Motor neuron (in vitro differentiated cells): ENCODE measurements at regions of chr10 and their contacts with region 1.

Region 1: GRCh38 chr10:21495752-21496342 is 29.6 kb downstream of the SKIDA1 start:
- ATAC-seq: peak; percentile 68 to 84 (median 75)
- H3K4me3 ChIP-seq: peak overlapping the region; percentile 66 to 80 (median 79)
- H3K27ac ChIP-seq: peak overlapping the region; percentile 92 to 94
- H3K4me1 ChIP-seq: peaks cover 12 to 17% of the 10 kb centered on the region in 2 donors

Region 2: GRCh38 chr10:20858292-20859124 is 637.3 kb before region 1 on chr10:
- in situ Hi-C with region 1: loop called in 1 of 9 experiments (anchors 25 kb)
- ATAC-seq: peak in 3 of 8 experiments; percentile 25 to 68 (median 55)
- H3K4me3 ChIP-seq: no peak overlapping the region
- H3K27ac ChIP-seq: no peak overlapping the region
- H3K4me1 ChIP-seq: no peaks in the 10 kb centered on the region

Region 3: DNA sequence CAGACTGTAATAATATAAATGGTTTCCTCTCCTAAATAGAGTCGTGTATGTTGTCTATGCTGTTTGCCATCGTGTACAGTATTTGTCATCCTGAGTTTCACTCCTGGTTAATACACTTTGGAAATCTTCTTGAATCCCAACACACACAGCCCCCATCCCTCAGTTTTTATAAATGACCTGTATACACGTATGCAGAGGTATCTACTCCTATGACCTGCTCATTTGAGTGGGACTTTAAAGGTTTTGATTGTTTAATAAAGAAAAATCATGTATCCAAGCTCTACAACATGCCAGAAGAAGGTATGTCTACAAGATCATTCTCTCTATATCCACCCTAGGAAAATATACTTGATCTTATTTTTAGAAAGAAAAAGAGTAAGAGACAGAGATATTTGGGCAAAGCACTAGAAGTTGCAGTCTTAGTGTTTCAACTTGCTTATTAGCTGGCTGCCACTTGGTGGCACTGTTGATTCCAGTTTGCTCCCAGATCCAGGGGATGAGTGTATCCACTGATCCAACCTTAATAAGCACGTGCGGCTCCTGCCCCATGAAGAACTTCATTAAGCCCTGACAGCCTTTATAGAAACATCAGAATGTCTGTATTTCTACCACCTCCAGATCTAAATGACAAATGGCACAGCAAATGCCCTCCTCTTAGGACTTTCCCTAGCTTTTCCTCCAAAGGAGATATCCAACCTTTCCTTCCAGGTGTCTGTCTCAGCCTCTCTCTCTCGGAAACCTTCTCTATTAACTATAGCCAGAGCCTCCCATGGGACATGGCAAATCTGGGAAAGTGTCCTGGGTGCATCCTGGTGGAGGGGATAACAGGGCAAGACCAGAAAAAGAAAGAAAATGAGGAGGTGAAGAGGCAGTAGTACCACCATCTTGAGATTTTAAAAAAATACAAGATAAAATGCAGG is 417.2 kb before region 1 on chr10:
- in situ Hi-C with region 1: loop called in 1 of 9 experiments (anchors 25 kb)
- ATAC-seq: peak; percentile 83 to 97 (median 91)
- H3K4me3 ChIP-seq: no peak overlapping the region
- H3K27ac ChIP-seq: no peak overlapping the region
- H3K4me1 ChIP-seq: peaks cover 0 to 9% of the 10 kb centered on the region in 2 donors

Region 4: GRCh38 chr10:21278491-21279239 is 217.2 kb before region 1 on chr10:
- in situ Hi-C with region 1: loop called in 6 of 9 experiments (anchors 10 to 25 kb)
- ATAC-seq: peak; percentile 83 to 99 (median 98)
- H3K4me3 ChIP-seq: no peak overlapping the region
- H3K27ac ChIP-seq: no peak overlapping the region
- H3K4me1 ChIP-seq: peaks cover 10% of the 10 kb centered on the region in 2 donors

Region 5: GRCh38 chr10:21599582-21599981 is 103.7 kb after region 1 on chr10:
- in situ Hi-C with region 1: no loop called
- ATAC-seq: no peak
- H3K4me3 ChIP-seq: no peak overlapping the region
- H3K27ac ChIP-seq: no peak overlapping the region
- H3K4me1 ChIP-seq: peaks cover 0 to 5% of the 10 kb centered on the region in 2 donors